OCI-LY7 (cell line): ENCODE measurements at regions of chr6 and their contacts with region 1.

Region 1: GRCh38 chr6:73585566-73586415 is 65.0 kb upstream of the EEF1A1 start:
- DNase-seq: peak; percentile 70
- H3K4me3 ChIP-seq: peak overlapping the region; percentile 56
- H3K27ac ChIP-seq: peak overlapping the region; percentile 78
- H3K4me1 ChIP-seq: peaks cover 21% of the 10 kb centered on the region
- CTCF ChIP-seq: no peak

Region 2: GRCh38 chr6:73503027-73503772 is 82.6 kb before region 1 on chr6:
- CTCF ChIA-PET with region 1: no interaction called
- POLR2A ChIA-PET with region 1: no interaction called
- intact Hi-C with region 1: no loop called
- DNase-seq: no peak
- H3K4me3 ChIP-seq: no peak overlapping the region
- H3K27ac ChIP-seq: no peak overlapping the region
- H3K4me1 ChIP-seq: no peaks in the 10 kb centered on the region
- CTCF ChIP-seq: no peak

Region 3: DNA sequence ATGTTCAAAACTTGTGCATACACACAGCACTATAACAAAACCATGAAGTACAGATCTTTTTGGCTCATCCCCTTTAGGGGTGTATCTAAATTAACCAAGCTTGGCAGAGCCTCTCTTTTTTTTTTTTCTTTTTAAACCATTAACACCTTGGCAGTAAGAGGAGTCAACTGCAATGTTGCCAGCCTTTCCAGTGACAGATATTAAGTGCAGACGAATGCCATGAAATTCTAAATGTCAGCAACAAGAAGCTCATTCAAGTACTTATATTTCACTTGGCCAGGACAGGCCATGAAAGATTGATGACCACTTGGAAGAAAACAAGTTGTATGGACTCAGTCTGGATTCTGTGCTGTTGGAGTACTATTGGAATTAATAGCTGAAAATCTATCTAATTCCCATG is 18.2 kb after region 1 on chr6:
- CTCF ChIA-PET with region 1: no interaction called
- POLR2A ChIA-PET with region 1: interaction called, 12 read pairs
- intact Hi-C with region 1: no loop called
- DNase-seq: no peak
- H3K4me3 ChIP-seq: no peak overlapping the region
- H3K27ac ChIP-seq: no peak overlapping the region
- H3K4me1 ChIP-seq: no peaks in the 10 kb centered on the region
- CTCF ChIP-seq: no peak

Region 4: GRCh38 chr6:73653571-73654424 is 68.0 kb after region 1 on chr6 and contains the start of gene SLC17A5:
- CTCF ChIA-PET with region 1: interaction called, 4 read pairs
- POLR2A ChIA-PET with region 1: interaction called, 9 read pairs
- intact Hi-C with region 1: loop called (anchors 5 kb)
- DNase-seq: peak; percentile 93
- H3K4me3 ChIP-seq: peak within 1 kb of the TSS; percentile 96
- H3K27ac ChIP-seq: peak within 1 kb of the TSS; percentile 83
- H3K4me1 ChIP-seq: peaks cover 19% of the 10 kb centered on the region
- CTCF ChIP-seq: no peak
- total RNA-seq, gene SLC17A5: 7.4 and 8.5 TPM in 2 replicates

Region 5: GRCh38 chr6:73695619-73696421 is 110.0 kb after region 1 on chr6 and contains the start of gene CD109:
- CTCF ChIA-PET with region 1: no interaction called
- POLR2A ChIA-PET with region 1: no interaction called
- intact Hi-C with region 1: no loop called
- DNase-seq: no peak
- H3K4me3 ChIP-seq: no peak within 1 kb of the TSS
- H3K27ac ChIP-seq: no peak within 1 kb of the TSS
- H3K4me1 ChIP-seq: no peaks in the 10 kb centered on the region
- CTCF ChIP-seq: no peak
- total RNA-seq, gene CD109: 0.13 TPM in 1 of 2 replicates, not detected in the other